ENCODE measurements at regions of chr4 and their contacts with region 1.

Region 1: GRCh38 chr4:37666625-37667071 is 19.5 kb downstream of the RELL1 start:
- DNase-seq: peak; percentile 62 to 83
- H3K4me3 ChIP-seq: no peak overlapping the region
- H3K4me3 Mint-ChIP-seq: peak overlapping the region; percentile 56
- H3K27ac Mint-ChIP-seq: peak overlapping the region; percentile 83
- H3K4me1 ChIP-seq: peaks cover 70% of the 10 kb centered on the region
- H3K4me1 Mint-ChIP-seq: peaks cover 19% of the 10 kb centered on the region
- H3K27me3 ChIP-seq: no peaks in the 10 kb centered on the region
- H3K27me3 Mint-ChIP-seq: no peaks in the 10 kb centered on the region
- CTCF ChIP-seq: peak in 1 of 2 experiments; percentile 47

Region 2: DNA sequence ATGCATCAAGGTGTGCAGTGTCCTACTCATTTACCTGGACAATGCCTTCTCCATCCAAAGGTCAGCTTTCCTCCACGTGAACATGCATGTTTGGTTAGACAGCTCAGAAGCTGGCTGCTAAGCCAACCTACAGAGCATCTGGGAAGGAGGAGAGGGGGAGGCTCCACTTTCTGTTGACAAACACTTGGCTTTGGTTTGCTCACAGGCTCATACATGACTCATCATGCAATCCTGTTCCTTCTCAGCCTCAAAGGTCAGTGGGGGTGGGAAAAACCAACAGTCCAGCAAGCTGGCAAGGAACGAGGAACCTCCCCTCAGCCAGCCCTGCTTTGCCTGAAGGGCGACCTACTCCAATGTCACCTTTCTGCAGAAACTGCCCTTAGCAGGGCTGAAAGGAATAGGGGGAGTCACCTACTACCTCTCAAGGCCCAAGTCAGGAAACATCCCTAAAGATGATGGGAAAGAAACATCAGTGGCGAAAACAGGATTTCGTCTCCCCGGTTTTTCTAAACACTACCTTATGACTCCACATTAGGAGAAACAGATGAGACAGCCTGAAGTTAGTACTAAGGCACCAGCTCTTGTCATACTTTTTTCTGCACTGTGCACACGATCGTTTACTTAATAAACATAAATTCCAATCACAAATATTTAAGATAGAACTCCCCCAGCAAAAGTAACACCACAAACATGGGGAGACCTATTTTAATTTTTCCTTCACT is 18.4 kb before region 1 on chr4:
- CTCF ChIA-PET with region 1: interaction called, 3 read pairs
- POLR2A ChIA-PET with region 1: interaction called, 3 read pairs
- intact Hi-C with region 1: loop called (anchors 1 kb)
- DNase-seq: peak; percentile 91 to 95
- H3K4me3 ChIP-seq: no peak overlapping the region
- H3K4me3 Mint-ChIP-seq: peak overlapping the region; percentile 62
- H3K27ac Mint-ChIP-seq: peak overlapping the region; percentile 81
- H3K4me1 ChIP-seq: peaks cover 47% of the 10 kb centered on the region
- H3K4me1 Mint-ChIP-seq: peaks cover 37% of the 10 kb centered on the region
- H3K27me3 ChIP-seq: no peaks in the 10 kb centered on the region
- H3K27me3 Mint-ChIP-seq: no peaks in the 10 kb centered on the region
- CTCF ChIP-seq: no peak

Measured in Caco-2 (cell line).